ENCODE measurements at regions of chr3 and their contacts with region 1.

Region 1: DNA sequence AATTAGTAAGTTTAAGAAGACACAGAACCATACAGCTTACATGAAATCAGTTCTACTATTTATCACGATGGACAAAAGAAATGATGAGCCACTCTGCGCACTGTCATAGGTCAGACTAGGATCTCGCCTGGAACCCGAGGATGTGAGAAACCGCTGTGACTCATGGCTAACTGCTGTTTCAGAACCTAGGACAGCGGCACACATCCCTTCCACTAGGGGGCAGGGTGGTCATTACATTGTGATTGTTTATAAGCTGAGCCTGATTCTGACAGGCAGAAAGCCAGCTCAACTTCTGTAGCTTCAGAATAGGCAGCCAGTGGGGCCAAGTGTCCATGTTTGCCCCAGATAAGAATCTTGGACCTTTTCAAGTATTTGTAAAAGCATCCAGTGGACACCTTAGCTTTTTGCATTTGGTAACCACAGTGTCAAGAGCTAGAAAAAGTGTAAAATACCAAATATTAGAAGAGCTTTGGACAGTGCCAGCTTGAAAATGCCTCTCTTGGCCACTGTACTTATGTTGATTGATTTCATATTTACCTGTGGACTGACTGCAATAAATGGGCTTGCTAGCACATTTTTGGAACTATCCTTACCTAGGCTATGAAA is 115.8 kb downstream of the KBTBD8 start:
- DNase-seq: peak; percentile 93
- ATAC-seq: peak; percentile 100
- H3K4me3 Mint-ChIP-seq: no peak overlapping the region
- H3K27ac Mint-ChIP-seq: no peak overlapping the region
- H3K4me1 Mint-ChIP-seq: peaks cover 4% of the 10 kb centered on the region
- H3K27me3 Mint-ChIP-seq: peaks cover 20% of the 10 kb centered on the region
- CTCF ChIP-seq: peak; percentile 77

Region 2: GRCh38 chr3:67083277-67083676 is 30.6 kb before region 1 on chr3:
- CTCF ChIA-PET with region 1: interaction called, 10 read pairs
- POLR2A ChIA-PET with region 1: no interaction called
- intact Hi-C with region 1: no loop called
- DNase-seq: peak; percentile 81
- ATAC-seq: peak; percentile 99
- H3K4me3 Mint-ChIP-seq: peak overlapping the region; percentile 24
- H3K27ac Mint-ChIP-seq: peak overlapping the region; percentile 90
- H3K4me1 Mint-ChIP-seq: peaks cover 23% of the 10 kb centered on the region
- H3K27me3 Mint-ChIP-seq: peaks cover 2% of the 10 kb centered on the region
- CTCF ChIP-seq: no peak

Region 3: DNA sequence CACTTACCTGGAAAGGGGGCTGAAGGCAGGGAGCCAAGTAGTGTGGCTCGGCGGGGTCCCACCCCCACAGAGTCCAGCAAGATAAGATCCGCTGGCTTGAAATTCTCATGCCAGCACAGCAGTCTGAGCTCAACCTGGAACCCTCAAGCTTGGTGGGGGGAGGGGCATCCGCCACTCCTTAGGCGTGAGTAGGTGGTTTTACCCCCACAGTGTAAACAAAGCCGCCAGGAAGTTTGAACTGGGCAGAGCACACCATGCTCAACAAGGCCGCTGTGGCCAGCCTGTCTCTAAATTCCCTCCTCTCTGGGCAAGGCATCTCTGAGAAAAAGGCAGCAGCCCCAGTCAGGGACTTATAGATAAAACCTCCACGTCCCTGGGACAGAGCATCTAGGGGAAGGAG is 40.5 kb after region 1 on chr3:
- CTCF ChIA-PET with region 1: no interaction called
- POLR2A ChIA-PET with region 1: no interaction called
- intact Hi-C with region 1: no loop called
- DNase-seq: no peak
- ATAC-seq: no peak
- H3K4me3 Mint-ChIP-seq: no peak overlapping the region
- H3K27ac Mint-ChIP-seq: no peak overlapping the region
- H3K4me1 Mint-ChIP-seq: no peaks in the 10 kb centered on the region
- H3K27me3 Mint-ChIP-seq: no peaks in the 10 kb centered on the region
- CTCF ChIP-seq: no peak

Region 4: GRCh38 chr3:67362686-67363085 is 248.8 kb after region 1 on chr3:
- CTCF ChIA-PET with region 1: interaction called, 5 read pairs
- POLR2A ChIA-PET with region 1: no interaction called
- intact Hi-C with region 1: loop called (anchors 5 kb)
- DNase-seq: peak; percentile 43
- ATAC-seq: peak; percentile 90
- H3K4me3 Mint-ChIP-seq: no peak overlapping the region
- H3K27ac Mint-ChIP-seq: no peak overlapping the region
- H3K4me1 Mint-ChIP-seq: peaks cover 28% of the 10 kb centered on the region
- H3K27me3 Mint-ChIP-seq: no peaks in the 10 kb centered on the region
- CTCF ChIP-seq: no peak

Region 5: GRCh38 chr3:67384760-67385397 is 271.0 kb after region 1 on chr3:
- CTCF ChIA-PET with region 1: interaction called, 10 read pairs
- POLR2A ChIA-PET with region 1: no interaction called
- intact Hi-C with region 1: no loop called
- DNase-seq: peak; percentile 36
- ATAC-seq: peak; percentile 55
- H3K4me3 Mint-ChIP-seq: no peak overlapping the region
- H3K27ac Mint-ChIP-seq: no peak overlapping the region
- H3K4me1 Mint-ChIP-seq: peaks cover 27% of the 10 kb centered on the region
- H3K27me3 Mint-ChIP-seq: no peaks in the 10 kb centered on the region
- CTCF ChIP-seq: peak; percentile 37

Region 6: GRCh38 chr3:67790043-67790442 is 676.1 kb after region 1 on chr3:
- CTCF ChIA-PET with region 1: interaction called, 25 read pairs
- POLR2A ChIA-PET with region 1: no interaction called
- intact Hi-C with region 1: loop called (anchors 10 kb)
- DNase-seq: peak; percentile 71
- ATAC-seq: peak; percentile 73
- H3K4me3 Mint-ChIP-seq: no peak overlapping the region
- H3K27ac Mint-ChIP-seq: no peak overlapping the region
- H3K4me1 Mint-ChIP-seq: peaks cover 8% of the 10 kb centered on the region
- H3K27me3 Mint-ChIP-seq: no peaks in the 10 kb centered on the region
- CTCF ChIP-seq: peak; percentile 76

Region 7: DNA sequence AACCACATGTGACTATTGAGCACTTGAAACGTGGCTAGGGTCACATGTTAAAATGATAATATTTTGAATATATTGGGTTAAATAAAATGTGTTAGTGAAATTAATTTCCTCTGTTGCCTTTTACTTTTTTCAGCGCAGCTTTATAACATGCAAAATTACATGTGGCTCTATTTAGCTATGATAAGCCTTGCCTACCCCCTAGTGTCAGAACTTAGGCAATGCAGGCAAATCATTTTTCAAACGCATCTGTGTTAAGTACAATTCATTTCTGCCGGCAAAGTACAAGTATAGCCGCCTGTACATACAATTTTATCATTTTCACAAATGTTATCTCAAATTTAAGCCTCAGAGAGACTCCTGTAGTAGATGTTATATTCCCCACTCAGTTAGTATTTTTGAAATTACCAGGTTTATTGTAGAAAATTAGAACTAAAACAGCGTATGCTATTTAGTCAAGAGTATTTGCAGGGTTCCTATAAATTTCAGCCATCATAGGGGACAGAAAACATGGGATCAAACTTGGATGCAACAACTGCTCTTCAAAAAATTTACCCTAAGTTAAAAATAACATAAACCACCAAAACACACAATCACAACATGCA is 1762.3 kb after region 1 on chr3:
- CTCF ChIA-PET with region 1: interaction called, 11 read pairs
- POLR2A ChIA-PET with region 1: no interaction called
- intact Hi-C with region 1: loop called (anchors 10 kb)
- DNase-seq: peak; percentile 44
- ATAC-seq: peak; percentile 76
- H3K4me3 Mint-ChIP-seq: no peak overlapping the region
- H3K27ac Mint-ChIP-seq: no peak overlapping the region
- H3K4me1 Mint-ChIP-seq: no peaks in the 10 kb centered on the region
- H3K27me3 Mint-ChIP-seq: peaks cover 5% of the 10 kb centered on the region
- CTCF ChIP-seq: peak; percentile 92